Breast epithelium (tissue), 4 donors: ENCODE measurements at regions of chr9 and their contacts with region 1.

Region 1: GRCh38 chr9:80004714-80005113 is 432.9 kb downstream of the TLE4 start:
- DNase-seq: no peak
- H3K4me3 ChIP-seq: no peak overlapping the region
- H3K27ac ChIP-seq: no peak overlapping the region
- H3K4me1 ChIP-seq: no peaks in the 10 kb centered on the region
- H3K27me3 ChIP-seq: no peaks in the 10 kb centered on the region
- CTCF ChIP-seq: no peak
- POLR2A ChIP-seq: no peak

Region 2: GRCh38 chr9:78304357-78304756 is 1700.4 kb before region 1 on chr9:
- intact Hi-C with region 1: loop called (anchors 10 kb)
- DNase-seq: no peak
- H3K4me3 ChIP-seq: no peak overlapping the region
- H3K27ac ChIP-seq: no peak overlapping the region
- H3K4me1 ChIP-seq: no peaks in the 10 kb centered on the region
- H3K27me3 ChIP-seq: peaks cover 0 to 8% of the 10 kb centered on the region in 2 donors
- CTCF ChIP-seq: no peak
- POLR2A ChIP-seq: no peak